CD8-positive, alpha-beta T cell (primary cell): ENCODE measurements at regions of chr1 and their contacts with region 1.

Region 1: DNA sequence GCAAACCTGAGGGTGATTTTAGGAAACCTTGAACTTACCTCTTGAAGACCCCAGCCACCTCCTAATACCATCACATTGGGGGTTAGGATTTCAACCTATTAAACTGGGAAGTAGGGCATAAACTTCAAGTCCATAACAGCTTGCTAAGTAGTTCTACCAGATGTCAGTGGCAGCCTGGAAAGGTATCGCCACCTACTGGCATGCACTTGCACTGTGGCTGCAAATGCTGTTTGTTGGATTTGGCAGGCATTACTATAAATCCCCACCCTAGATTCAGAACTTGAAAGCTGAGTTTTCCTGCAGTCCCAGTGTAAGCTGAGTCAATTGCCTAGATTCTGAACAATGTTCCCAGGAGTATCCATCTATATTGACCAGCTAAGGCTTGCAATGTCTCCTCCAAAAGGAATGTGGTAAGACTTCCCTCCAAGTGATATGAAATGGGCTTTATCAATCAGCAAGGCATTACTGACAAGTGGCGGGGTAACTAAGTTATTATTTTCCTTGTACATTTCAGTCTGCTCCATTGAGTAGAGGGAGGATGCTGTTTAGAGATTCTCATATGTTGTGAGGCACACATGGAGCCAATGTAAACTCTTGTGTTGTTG is 474.5 kb downstream of the PTPRC start:
- DNase-seq: peak; percentile 26 to 78 (median 65)
- ATAC-seq: peak; percentile 62
- H3K4me3 ChIP-seq: no peak overlapping the region
- H3K4me3 Mint-ChIP-seq: no peak overlapping the region
- H3K27ac ChIP-seq: no peak overlapping the region
- H3K27ac Mint-ChIP-seq: no peak overlapping the region
- H3K4me1 ChIP-seq: no peaks in the 10 kb centered on the region
- H3K4me1 Mint-ChIP-seq: peaks cover 3% of the 10 kb centered on the region
- H3K27me3 ChIP-seq: no peaks in the 10 kb centered on the region
- H3K27me3 Mint-ChIP-seq: no peaks in the 10 kb centered on the region
- CTCF ChIP-seq: peak; percentile 74

Region 2: GRCh38 chr1:197825541-197825940 is 1287.8 kb before region 1 on chr1:
- CTCF ChIA-PET with region 1: no interaction called
- POLR2A ChIA-PET with region 1: no interaction called
- intact Hi-C with region 1: no loop called
- DNase-seq: no peak
- ATAC-seq: no peak
- H3K4me3 ChIP-seq: no peak overlapping the region
- H3K4me3 Mint-ChIP-seq: no peak overlapping the region
- H3K27ac ChIP-seq: no peak overlapping the region
- H3K27ac Mint-ChIP-seq: no peak overlapping the region
- H3K4me1 ChIP-seq: no peaks in the 10 kb centered on the region
- H3K4me1 Mint-ChIP-seq: no peaks in the 10 kb centered on the region
- H3K27me3 ChIP-seq: no peaks in the 10 kb centered on the region
- H3K27me3 Mint-ChIP-seq: no peaks in the 10 kb centered on the region
- CTCF ChIP-seq: no peak

Region 3: DNA sequence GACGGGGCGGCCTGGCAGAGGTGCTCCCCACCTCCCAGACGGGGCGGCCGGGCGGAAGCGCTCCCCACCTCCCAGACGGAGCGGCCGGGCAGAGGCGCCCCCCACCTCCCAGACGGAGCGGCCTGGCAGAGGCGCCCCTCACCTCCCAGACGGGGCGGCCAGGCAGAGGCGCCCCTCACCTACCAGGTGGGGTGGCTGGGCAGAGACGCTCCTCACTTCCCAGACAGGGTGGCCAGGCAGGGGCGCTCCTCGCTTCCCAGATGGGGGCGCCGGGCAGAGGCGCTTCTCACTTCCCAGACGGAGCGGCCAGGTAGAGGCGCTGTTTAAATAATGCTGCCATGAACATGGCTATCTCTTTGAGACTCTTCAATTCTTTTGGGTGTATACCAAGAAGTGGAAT is 529.2 kb before region 1 on chr1:
- CTCF ChIA-PET with region 1: no interaction called
- POLR2A ChIA-PET with region 1: no interaction called
- intact Hi-C with region 1: no loop called
- DNase-seq: no peak
- ATAC-seq: no peak
- H3K4me3 ChIP-seq: no peak overlapping the region
- H3K4me3 Mint-ChIP-seq: no peak overlapping the region
- H3K27ac ChIP-seq: no peak overlapping the region
- H3K27ac Mint-ChIP-seq: no peak overlapping the region
- H3K4me1 ChIP-seq: no peaks in the 10 kb centered on the region
- H3K4me1 Mint-ChIP-seq: no peaks in the 10 kb centered on the region
- H3K27me3 ChIP-seq: no peaks in the 10 kb centered on the region
- H3K27me3 Mint-ChIP-seq: no peaks in the 10 kb centered on the region
- CTCF ChIP-seq: no peak

Region 4: GRCh38 chr1:198749279-198749678 is 364.1 kb before region 1 on chr1:
- CTCF ChIA-PET with region 1: interaction called, 10 read pairs
- POLR2A ChIA-PET with region 1: no interaction called
- intact Hi-C with region 1: no loop called
- DNase-seq: no peak
- ATAC-seq: no peak
- H3K4me3 ChIP-seq: no peak overlapping the region
- H3K4me3 Mint-ChIP-seq: no peak overlapping the region
- H3K27ac ChIP-seq: no peak overlapping the region
- H3K27ac Mint-ChIP-seq: peak overlapping the region; percentile 15
- H3K4me1 ChIP-seq: peaks cover 29% of the 10 kb centered on the region
- H3K4me1 Mint-ChIP-seq: peaks cover 19% of the 10 kb centered on the region
- H3K27me3 ChIP-seq: no peaks in the 10 kb centered on the region
- H3K27me3 Mint-ChIP-seq: no peaks in the 10 kb centered on the region
- CTCF ChIP-seq: no peak

Region 5: DNA sequence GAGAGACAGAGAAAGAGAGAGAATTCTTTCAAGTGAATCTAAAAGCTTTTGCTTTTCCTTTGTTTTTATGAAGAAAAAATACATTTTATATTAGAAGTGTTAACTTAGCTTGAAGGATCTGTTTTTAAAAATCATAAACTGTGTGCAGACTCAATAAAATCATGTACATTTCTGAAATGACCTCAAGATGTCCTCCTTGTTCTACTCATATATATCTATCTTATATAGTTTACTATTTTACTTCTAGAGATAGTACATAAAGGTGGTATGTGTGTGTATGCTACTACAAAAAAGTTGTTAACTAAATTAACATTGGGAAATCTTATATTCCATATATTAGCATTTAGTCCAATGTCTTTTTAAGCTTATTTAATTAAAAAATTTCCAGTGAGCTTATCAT is 356.9 kb before region 1 on chr1:
- CTCF ChIA-PET with region 1: interaction called, 16 read pairs
- POLR2A ChIA-PET with region 1: no interaction called
- intact Hi-C with region 1: loop called in 1 of 2 experiments (anchors 5 kb)
- DNase-seq: peak in 1 of 9 experiments; percentile 34
- ATAC-seq: peak; percentile 30
- H3K4me3 ChIP-seq: no peak overlapping the region
- H3K4me3 Mint-ChIP-seq: no peak overlapping the region
- H3K27ac ChIP-seq: no peak overlapping the region
- H3K27ac Mint-ChIP-seq: no peak overlapping the region
- H3K4me1 ChIP-seq: no peaks in the 10 kb centered on the region
- H3K4me1 Mint-ChIP-seq: peaks cover 24% of the 10 kb centered on the region
- H3K27me3 ChIP-seq: no peaks in the 10 kb centered on the region
- H3K27me3 Mint-ChIP-seq: no peaks in the 10 kb centered on the region
- CTCF ChIP-seq: no peak

Region 6: GRCh38 chr1:198771563-198772153 is 341.7 kb before region 1 on chr1:
- CTCF ChIA-PET with region 1: interaction called, 6 read pairs
- POLR2A ChIA-PET with region 1: no interaction called
- intact Hi-C with region 1: loop called (anchors 1 to 2 kb)
- DNase-seq: peak in 2 of 9 experiments; percentile 38 to 61
- ATAC-seq: no peak
- H3K4me3 ChIP-seq: no peak overlapping the region
- H3K4me3 Mint-ChIP-seq: no peak overlapping the region
- H3K27ac ChIP-seq: no peak overlapping the region
- H3K27ac Mint-ChIP-seq: no peak overlapping the region
- H3K4me1 ChIP-seq: no peaks in the 10 kb centered on the region
- H3K4me1 Mint-ChIP-seq: peaks cover 2% of the 10 kb centered on the region
- H3K27me3 ChIP-seq: no peaks in the 10 kb centered on the region
- H3K27me3 Mint-ChIP-seq: no peaks in the 10 kb centered on the region
- CTCF ChIP-seq: peak; percentile 65

Region 7: GRCh38 chr1:198833706-198834503 is 279.5 kb before region 1 on chr1:
- CTCF ChIA-PET with region 1: no interaction called
- POLR2A ChIA-PET with region 1: no interaction called
- intact Hi-C with region 1: no loop called
- DNase-seq: no peak
- ATAC-seq: no peak
- H3K4me3 ChIP-seq: no peak overlapping the region
- H3K4me3 Mint-ChIP-seq: no peak overlapping the region
- H3K27ac ChIP-seq: no peak overlapping the region
- H3K27ac Mint-ChIP-seq: no peak overlapping the region
- H3K4me1 ChIP-seq: no peaks in the 10 kb centered on the region
- H3K4me1 Mint-ChIP-seq: peaks cover 10% of the 10 kb centered on the region
- H3K27me3 ChIP-seq: no peaks in the 10 kb centered on the region
- H3K27me3 Mint-ChIP-seq: no peaks in the 10 kb centered on the region
- CTCF ChIP-seq: no peak

Region 8: GRCh38 chr1:198880818-198881597 is 232.4 kb before region 1 on chr1:
- CTCF ChIA-PET with region 1: interaction called, 9 read pairs
- POLR2A ChIA-PET with region 1: no interaction called
- intact Hi-C with region 1: loop called (anchors 2 kb)
- DNase-seq: peak in 1 of 9 experiments; percentile 24
- ATAC-seq: no peak
- H3K4me3 ChIP-seq: no peak overlapping the region
- H3K4me3 Mint-ChIP-seq: no peak overlapping the region
- H3K27ac ChIP-seq: no peak overlapping the region
- H3K27ac Mint-ChIP-seq: no peak overlapping the region
- H3K4me1 ChIP-seq: no peaks in the 10 kb centered on the region
- H3K4me1 Mint-ChIP-seq: peaks cover 6% of the 10 kb centered on the region
- H3K27me3 ChIP-seq: no peaks in the 10 kb centered on the region
- H3K27me3 Mint-ChIP-seq: no peaks in the 10 kb centered on the region
- CTCF ChIP-seq: no peak

Region 9: GRCh38 chr1:199123615-199124014 is 10.2 kb after region 1 on chr1:
- CTCF ChIA-PET with region 1: interaction called, 19 read pairs
- POLR2A ChIA-PET with region 1: interaction called, 3 read pairs
- intact Hi-C with region 1: no loop called
- DNase-seq: peak in 1 of 9 experiments; percentile 6
- ATAC-seq: no peak
- H3K4me3 ChIP-seq: no peak overlapping the region
- H3K4me3 Mint-ChIP-seq: no peak overlapping the region
- H3K27ac ChIP-seq: no peak overlapping the region
- H3K27ac Mint-ChIP-seq: no peak overlapping the region
- H3K4me1 ChIP-seq: no peaks in the 10 kb centered on the region
- H3K4me1 Mint-ChIP-seq: peaks cover 4% of the 10 kb centered on the region
- H3K27me3 ChIP-seq: no peaks in the 10 kb centered on the region
- H3K27me3 Mint-ChIP-seq: no peaks in the 10 kb centered on the region
- CTCF ChIP-seq: no peak

Region 10: DNA sequence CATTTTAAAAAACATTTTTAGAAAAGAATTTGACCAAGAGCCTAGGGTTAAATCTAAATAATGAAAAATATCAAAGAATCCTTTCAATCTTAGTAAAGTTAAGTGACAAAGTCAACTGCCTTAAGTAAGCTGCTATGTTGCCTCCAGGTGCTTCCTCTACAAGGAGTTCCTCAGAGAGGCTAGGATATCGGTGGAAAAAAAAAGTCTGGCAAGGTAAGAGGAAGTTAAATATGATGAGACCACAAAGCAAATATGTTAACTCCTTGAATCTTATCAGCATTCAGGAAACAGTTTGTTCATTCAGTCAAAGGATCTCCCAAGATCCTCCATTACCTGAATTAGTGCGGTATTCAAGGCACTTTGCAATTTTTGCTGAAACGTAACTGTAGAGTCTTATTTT is 89.0 kb after region 1 on chr1:
- CTCF ChIA-PET with region 1: no interaction called
- POLR2A ChIA-PET with region 1: no interaction called
- intact Hi-C with region 1: no loop called
- DNase-seq: no peak
- ATAC-seq: no peak
- H3K4me3 ChIP-seq: no peak overlapping the region
- H3K4me3 Mint-ChIP-seq: no peak overlapping the region
- H3K27ac ChIP-seq: no peak overlapping the region
- H3K27ac Mint-ChIP-seq: no peak overlapping the region
- H3K4me1 ChIP-seq: no peaks in the 10 kb centered on the region
- H3K4me1 Mint-ChIP-seq: peaks cover 2% of the 10 kb centered on the region
- H3K27me3 ChIP-seq: no peaks in the 10 kb centered on the region
- H3K27me3 Mint-ChIP-seq: peaks cover 3% of the 10 kb centered on the region
- CTCF ChIP-seq: no peak

Region 11: GRCh38 chr1:199243423-199244061 is 130.2 kb after region 1 on chr1:
- CTCF ChIA-PET with region 1: interaction called, 3 read pairs
- POLR2A ChIA-PET with region 1: no interaction called
- intact Hi-C with region 1: loop called in 1 of 2 experiments (anchors 5 kb)
- DNase-seq: peak; percentile 31 to 78 (median 57)
- ATAC-seq: peak; percentile 88
- H3K4me3 ChIP-seq: no peak overlapping the region
- H3K4me3 Mint-ChIP-seq: no peak overlapping the region
- H3K27ac ChIP-seq: no peak overlapping the region
- H3K27ac Mint-ChIP-seq: no peak overlapping the region
- H3K4me1 ChIP-seq: no peaks in the 10 kb centered on the region
- H3K4me1 Mint-ChIP-seq: no peaks in the 10 kb centered on the region
- H3K27me3 ChIP-seq: no peaks in the 10 kb centered on the region
- H3K27me3 Mint-ChIP-seq: peaks cover 3% of the 10 kb centered on the region
- CTCF ChIP-seq: peak; percentile 57